ENCODE measurements at regions of chr2 and their contacts with region 1.

Region 1: GRCh38 chr2:25041928-25042320 is at the start of gene EFR3B:
- DNase-seq: peak; percentile 90 to 92 (median 91)
- H3K4me3 ChIP-seq: peak within 1 kb of the TSS; percentile 38 to 81 (median 40)
- H3K4me3 Mint-ChIP-seq: peak within 1 kb of the TSS; percentile 77 to 92
- H3K27ac ChIP-seq: no peak within 1 kb of the TSS
- H3K27ac Mint-ChIP-seq: peak within 1 kb of the TSS in 3 of 7 donors; percentile 31 to 54 (median 54)
- H3K4me1 ChIP-seq: peaks cover 18 to 20% of the 10 kb centered on the region in 2 donors
- H3K4me1 Mint-ChIP-seq: peaks cover 24% of the 10 kb centered on the region
- H3K27me3 ChIP-seq: peaks cover 28 to 52% of the 10 kb centered on the region in 2 donors
- H3K27me3 Mint-ChIP-seq: peaks cover 53 to 73% (median 58%) of the 10 kb centered on the region in 3 donors
- CTCF ChIP-seq: no peak
- polyA plus RNA-seq, gene EFR3B: not detected

Region 2: DNA sequence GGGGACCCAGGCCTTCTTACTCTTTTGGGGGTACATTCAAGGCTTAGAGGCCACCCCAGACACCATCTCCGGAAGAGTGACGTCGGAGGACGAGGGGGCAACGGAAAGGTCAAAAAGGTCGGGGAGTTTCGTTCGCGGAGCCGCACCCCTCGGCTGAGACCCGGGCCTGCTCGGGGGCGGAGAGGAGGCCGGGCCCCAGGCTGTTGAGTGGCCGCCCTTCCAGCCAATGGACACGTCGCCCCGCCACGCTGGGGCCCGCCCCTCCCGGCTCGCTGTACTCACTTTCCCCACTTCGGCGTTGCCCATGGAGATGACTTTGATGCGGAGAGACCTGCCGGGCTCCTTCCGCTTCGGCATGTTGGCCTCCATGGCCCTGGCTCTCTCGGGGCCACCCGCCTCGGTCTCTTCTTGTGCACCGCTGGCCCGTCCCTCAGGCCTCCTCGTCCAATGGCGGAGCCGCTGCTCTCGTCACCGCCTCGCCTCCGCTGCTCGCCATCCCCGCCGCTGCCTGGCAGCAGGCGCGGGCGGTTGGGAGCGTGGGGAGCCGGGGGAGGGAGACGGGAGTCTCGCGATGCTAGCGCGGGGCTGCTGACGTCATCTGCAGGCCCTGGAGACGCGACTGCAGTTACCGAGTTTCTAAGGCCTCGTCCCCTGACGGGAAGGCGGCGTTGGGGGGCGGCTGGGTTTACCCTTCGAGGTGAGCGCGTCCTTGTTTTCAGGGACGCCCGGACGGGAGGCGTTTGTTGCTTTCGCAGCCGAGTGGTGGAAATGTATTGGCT is 70.2 kb before region 1 on chr2 and contains the start of gene DNAJC27:
- intact Hi-C with region 1: loop called (anchors 5 kb)
- DNase-seq: peak; percentile 95 to 97 (median 96)
- H3K4me3 ChIP-seq: peak within 1 kb of the TSS; percentile 64 to 84 (median 76)
- H3K4me3 Mint-ChIP-seq: peak within 1 kb of the TSS; percentile 92 to 97
- H3K27ac ChIP-seq: peak within 1 kb of the TSS; percentile 95 to 96
- H3K27ac Mint-ChIP-seq: peak within 1 kb of the TSS; percentile 99 to 100 (median 100)
- H3K4me1 ChIP-seq: peaks cover 6 to 26% of the 10 kb centered on the region in 2 donors
- H3K4me1 Mint-ChIP-seq: peaks cover 13% of the 10 kb centered on the region
- H3K27me3 ChIP-seq: no peaks in the 10 kb centered on the region
- H3K27me3 Mint-ChIP-seq: no peaks in the 10 kb centered on the region
- CTCF ChIP-seq: no peak
- polyA plus RNA-seq, gene DNAJC27: 0.86 to 2.8 (median 2.2) TPM

Region 3: GRCh38 chr2:24977631-24978030 is 64.3 kb before region 1 on chr2:
- intact Hi-C with region 1: loop called (anchors 5 kb)
- DNase-seq: no peak
- H3K4me3 ChIP-seq: no peak overlapping the region
- H3K4me3 Mint-ChIP-seq: no peak overlapping the region
- H3K27ac ChIP-seq: no peak overlapping the region
- H3K27ac Mint-ChIP-seq: no peak overlapping the region
- H3K4me1 ChIP-seq: peaks cover 0 to 8% of the 10 kb centered on the region in 2 donors
- H3K4me1 Mint-ChIP-seq: peaks cover 4% of the 10 kb centered on the region
- H3K27me3 ChIP-seq: no peaks in the 10 kb centered on the region
- H3K27me3 Mint-ChIP-seq: peaks cover 0 to 3% (median 0%) of the 10 kb centered on the region in 3 donors
- CTCF ChIP-seq: no peak